ENCODE measurements at regions of chr16 and their contacts with region 1.

Region 1: GRCh38 chr16:2911580-2912329 is at the start of gene FLYWCH1:
- DNase-seq: peak; percentile 92

Region 2: GRCh38 chr16:2799866-2800239 is 111.9 kb before region 1 on chr16:
- CTCF ChIA-PET with region 1: no interaction called
- POLR2A ChIA-PET with region 1: no interaction called
- DNase-seq: no peak

Region 3: GRCh38 chr16:2838928-2839327 is 72.8 kb before region 1 on chr16:
- CTCF ChIA-PET with region 1: interaction called, 10 read pairs
- POLR2A ChIA-PET with region 1: interaction called, 3 read pairs
- DNase-seq: peak; percentile 75

Region 4: GRCh38 chr16:2867987-2868789 is 43.6 kb before region 1 on chr16:
- CTCF ChIA-PET with region 1: interaction called, 5 read pairs
- POLR2A ChIA-PET with region 1: interaction called, 12 read pairs
- DNase-seq: peak; percentile 95

Region 5: DNA sequence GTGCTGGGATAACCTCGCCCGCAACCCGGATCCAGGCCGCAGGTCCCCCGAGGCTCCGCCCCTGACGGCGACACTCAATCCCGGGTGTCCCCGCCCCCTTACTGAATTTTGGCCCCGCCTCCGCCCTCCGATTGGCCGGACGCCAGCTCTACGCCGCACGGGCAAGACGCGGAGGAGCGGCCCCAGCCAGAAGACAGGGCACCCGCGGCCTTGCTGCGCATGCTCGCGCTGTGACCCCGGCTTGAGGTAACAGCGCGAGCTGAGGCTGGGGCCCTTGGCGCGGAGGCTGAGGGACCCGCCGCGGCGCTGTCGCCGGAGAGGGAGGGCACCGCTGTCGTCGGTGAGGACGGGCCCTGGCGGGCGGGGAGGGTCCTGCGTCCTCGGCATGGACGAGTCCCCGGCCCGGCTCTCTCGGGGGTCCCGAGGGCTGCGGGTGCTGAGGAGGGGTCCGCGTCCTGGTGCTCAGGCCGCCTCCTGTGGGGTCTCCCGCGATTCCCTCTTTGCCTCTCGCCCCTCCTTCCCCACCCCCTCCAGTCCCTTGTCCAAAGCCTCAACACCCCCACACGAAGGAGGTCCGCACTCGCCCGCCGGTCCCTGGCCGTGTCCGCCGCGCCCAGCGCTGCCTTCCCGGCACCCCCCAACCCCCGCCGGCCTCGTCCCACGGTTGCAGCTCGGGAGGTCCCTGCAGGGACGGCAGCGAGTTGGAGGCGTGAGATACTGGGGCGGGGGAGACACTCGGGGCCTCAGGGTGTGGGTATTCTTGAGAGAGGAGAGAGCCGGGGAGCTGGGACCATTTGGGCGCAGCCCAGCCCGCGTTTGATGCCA is 28.5 kb before region 1 on chr16 and contains the start of gene FLYWCH2:
- CTCF ChIA-PET with region 1: no interaction called
- POLR2A ChIA-PET with region 1: interaction called, 24 read pairs
- DNase-seq: peak; percentile 95

Region 6: GRCh38 chr16:2926650-2927646 is 15.2 kb after region 1 on chr16:
- CTCF ChIA-PET with region 1: interaction called, 13 read pairs
- POLR2A ChIA-PET with region 1: interaction called, 4 read pairs
- DNase-seq: peak; percentile 80

Region 7: DNA sequence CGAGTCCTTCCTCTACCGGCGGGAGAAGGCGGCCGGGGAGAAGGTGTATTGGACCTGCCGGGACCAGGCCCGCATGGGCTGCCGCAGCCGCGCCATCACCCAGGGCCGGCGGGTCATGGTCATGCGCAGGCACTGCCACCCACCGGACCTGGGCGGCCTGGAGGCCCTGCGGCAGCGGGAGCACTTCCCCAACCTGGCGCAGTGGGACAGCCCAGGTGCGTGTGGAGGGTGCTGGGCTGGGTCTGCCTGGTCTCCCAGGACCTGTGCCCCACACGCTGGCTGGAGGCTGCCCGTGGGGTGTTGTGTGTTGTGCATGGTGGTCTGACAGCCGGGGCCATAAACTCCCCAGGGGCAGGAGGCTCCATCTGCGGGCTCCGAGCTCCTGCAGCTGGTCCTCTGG is 25.4 kb after region 1 on chr16:
- CTCF ChIA-PET with region 1: no interaction called
- POLR2A ChIA-PET with region 1: no interaction called
- DNase-seq: no peak

Measured in HEK293T (cell line).